AG04450 (cell line): ENCODE measurements at regions of chr1 and their contacts with region 1.

Region 1: DNA sequence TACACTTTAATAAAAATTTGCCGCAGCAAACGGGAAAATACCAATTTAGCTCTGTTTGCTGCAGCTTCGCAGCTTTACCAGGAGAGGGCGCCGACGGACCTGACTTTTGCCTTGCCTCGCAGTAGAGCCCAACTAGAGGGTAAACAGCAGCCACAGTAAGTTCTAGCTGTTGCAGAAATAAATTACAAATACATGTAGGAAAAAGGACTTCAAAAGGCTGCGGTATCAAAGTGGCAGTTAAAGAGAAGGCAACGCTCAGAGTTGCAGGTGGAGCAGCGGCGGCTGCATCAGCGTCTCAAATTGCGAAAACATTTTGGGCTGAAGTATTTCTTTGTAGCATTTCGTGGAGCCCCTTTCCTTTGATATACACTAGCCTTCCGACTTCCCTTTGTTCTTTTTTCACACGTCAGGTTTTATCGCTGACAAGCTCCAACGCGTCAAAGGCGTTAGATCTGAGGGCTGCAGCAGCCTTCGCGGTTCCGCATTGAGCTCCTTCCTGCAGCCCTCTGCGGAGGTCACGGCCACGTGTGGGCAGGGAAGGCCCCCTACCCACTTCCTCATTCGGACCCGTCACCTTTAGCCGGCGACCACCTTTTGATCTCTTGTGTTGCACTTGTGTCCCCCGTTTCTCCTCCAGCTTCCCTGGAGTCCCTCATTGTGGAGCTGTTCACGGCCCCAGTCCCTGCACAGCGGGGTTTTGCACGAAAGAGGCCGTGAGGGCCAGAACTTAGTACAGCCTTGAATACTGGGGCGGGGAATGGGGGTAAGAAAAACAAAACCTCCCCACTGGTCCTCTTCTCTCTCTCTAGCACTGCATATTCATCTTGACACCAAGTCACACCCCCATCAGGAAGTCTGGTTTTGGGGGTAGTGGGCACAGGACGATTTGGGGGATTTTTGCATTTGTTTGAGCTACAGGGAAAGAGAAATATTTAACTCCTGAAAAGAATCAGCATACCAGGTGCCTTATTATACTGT is 72.8 kb downstream of the S1PR1 start:
- DNase-seq: no peak
- H3K4me3 ChIP-seq: peak overlapping the region; percentile 29
- H3K27ac ChIP-seq: no peak overlapping the region
- H3K27me3 ChIP-seq: peaks cover 39% of the 10 kb centered on the region
- CTCF ChIP-seq: peak; percentile 89

Region 2: GRCh38 chr1:101323535-101323934 is 13.9 kb after region 1 on chr1:
- CTCF ChIA-PET with region 1: interaction called, 24 read pairs
- POLR2A ChIA-PET with region 1: no interaction called
- DNase-seq: no peak
- H3K4me3 ChIP-seq: no peak overlapping the region
- H3K27ac ChIP-seq: no peak overlapping the region
- H3K27me3 ChIP-seq: peaks cover 5% of the 10 kb centered on the region
- CTCF ChIP-seq: no peak

Region 3: GRCh38 chr1:101357444-101357986 is 47.9 kb after region 1 on chr1:
- CTCF ChIA-PET with region 1: interaction called, 99 read pairs
- POLR2A ChIA-PET with region 1: no interaction called
- DNase-seq: peak; percentile 58
- H3K4me3 ChIP-seq: no peak overlapping the region
- H3K27ac ChIP-seq: no peak overlapping the region
- H3K27me3 ChIP-seq: no peaks in the 10 kb centered on the region
- CTCF ChIP-seq: peak; percentile 92

Region 4: DNA sequence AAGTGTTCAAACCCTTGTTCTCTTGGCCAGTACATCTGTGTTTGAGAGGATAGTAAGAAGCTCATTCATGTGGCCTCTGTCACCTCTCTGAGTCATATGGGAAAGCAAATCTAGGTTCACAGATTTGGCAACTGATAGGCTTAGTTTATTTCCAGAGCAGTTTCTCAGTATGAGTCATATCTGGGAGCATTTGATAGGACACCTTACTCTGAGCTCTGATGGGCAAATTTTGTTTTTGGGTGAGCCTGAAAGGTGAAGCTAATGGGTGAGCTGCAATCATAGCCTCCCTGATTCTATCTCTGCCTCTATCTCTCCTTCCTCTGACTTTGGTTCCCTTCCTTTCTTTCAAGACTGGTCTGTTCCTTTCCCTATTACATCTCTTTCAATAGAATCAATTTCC is 61.6 kb after region 1 on chr1:
- CTCF ChIA-PET with region 1: interaction called, 15 read pairs
- POLR2A ChIA-PET with region 1: no interaction called
- DNase-seq: peak; percentile 34
- H3K4me3 ChIP-seq: no peak overlapping the region
- H3K27ac ChIP-seq: no peak overlapping the region
- H3K27me3 ChIP-seq: peaks cover 4% of the 10 kb centered on the region
- CTCF ChIP-seq: no peak

Region 5: GRCh38 chr1:102174259-102174863 is 864.7 kb after region 1 on chr1:
- CTCF ChIA-PET with region 1: no interaction called
- POLR2A ChIA-PET with region 1: no interaction called
- DNase-seq: no peak
- H3K4me3 ChIP-seq: no peak overlapping the region
- H3K27ac ChIP-seq: no peak overlapping the region
- H3K27me3 ChIP-seq: no peaks in the 10 kb centered on the region
- CTCF ChIP-seq: 0 out of 2 replicates have a peak, but pooled peaks have one; percentile 10